Right ventricle myocardium superior (tissue), 1 donor: ENCODE measurements at regions of chr2 and their contacts with region 1.

Region 1: DNA sequence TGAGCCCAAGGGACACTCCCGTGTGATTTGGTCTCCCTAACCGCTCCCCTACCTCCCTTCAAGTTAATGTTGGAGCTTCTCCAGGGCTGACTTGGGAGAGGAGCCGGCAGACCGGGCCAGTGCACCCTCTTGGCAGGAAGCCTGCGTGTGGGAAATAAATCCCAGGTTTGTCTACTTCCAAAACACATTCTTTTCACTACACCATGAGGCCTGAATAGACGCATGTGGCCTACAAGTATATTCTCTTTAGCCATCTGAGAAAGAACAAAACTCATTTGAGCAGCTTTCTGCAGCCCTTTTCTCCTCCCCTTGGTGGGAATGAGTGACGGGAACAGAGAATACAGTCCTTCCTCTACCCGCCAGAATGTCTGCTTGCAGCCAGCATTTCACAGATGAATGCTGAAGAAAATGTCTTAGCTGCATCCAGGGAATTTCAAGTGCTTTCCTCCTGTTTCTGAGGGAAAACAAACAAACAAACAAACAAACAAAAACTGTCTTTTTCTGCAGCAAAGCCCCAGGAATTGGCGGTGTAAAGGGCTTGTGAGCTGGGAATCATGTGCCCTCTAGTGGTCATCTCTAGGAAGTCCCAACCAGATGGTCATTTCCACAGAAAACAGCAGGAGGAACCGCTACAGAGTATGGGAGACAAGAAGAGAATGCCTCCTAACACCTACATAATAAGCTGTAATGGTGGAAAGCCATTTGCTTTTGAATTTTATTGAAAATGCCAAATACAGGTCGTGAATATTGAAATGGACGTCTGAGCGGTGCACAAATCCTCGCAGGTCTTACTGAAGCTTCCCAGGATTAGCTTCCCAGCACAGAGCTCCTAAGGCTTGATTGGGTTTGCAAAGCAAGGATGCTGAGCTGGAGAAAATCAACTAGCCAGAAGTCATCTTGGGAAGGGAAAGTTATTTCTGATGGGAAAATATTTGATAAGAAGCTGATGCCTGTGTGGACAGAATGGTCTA is 41.2 kb upstream of the DAPL1 start:
- DNase-seq: no peak
- ATAC-seq: peak; percentile 93

Region 2: DNA sequence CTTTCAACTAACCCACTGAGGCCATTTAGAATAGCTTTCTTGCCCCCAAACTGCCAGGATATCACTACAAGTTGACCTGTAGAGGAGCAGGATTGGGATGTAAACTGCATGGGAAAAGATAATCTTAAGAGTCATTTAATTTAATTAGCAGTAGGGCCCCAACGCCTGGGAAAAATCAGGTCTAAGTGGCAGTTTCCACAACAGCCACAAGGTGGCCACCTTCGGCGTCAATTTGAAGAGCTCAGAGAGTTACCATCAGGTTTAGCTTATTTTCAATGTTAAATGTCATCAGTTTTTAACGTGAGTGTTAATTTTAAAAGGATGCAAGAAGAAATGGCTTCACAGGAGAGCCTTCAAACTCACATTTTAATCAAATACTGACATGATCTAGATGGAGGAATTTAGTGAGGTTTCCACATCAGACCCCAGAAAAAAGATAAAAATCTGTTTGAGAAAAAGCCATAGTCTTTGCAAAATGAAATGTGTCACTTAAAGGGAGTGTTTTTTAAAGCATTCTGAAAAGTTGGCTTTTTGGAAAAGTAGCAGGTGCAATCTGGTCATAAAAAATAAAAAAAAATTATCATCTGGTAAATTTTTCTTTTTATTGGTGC is 729.5 kb before region 1 on chr2:
- intact Hi-C with region 1: loop called (anchors 5 kb)
- DNase-seq: peak; percentile 62
- ATAC-seq: peak; percentile 56

Region 3: DNA sequence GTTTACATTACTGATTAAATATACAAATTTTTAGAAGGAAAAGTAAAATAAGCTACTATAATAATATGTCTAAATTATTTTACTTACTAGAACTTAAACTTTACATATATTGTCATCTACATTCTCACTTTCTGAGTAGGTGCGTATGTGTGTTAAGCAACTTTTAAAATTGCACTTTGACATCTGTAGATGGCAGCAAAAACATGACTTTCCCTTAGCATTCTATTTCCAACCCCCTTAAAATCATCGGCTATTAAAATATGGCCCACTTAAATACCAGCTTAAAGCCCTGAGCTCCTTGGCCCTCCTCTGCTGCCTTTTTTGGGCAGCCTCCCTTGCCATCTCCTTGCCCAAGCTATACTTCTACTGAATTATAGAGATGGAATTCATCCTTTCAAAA is 574.3 kb before region 1 on chr2:
- intact Hi-C with region 1: loop called (anchors 5 kb)
- DNase-seq: no peak
- ATAC-seq: peak; percentile 56

Region 4: DNA sequence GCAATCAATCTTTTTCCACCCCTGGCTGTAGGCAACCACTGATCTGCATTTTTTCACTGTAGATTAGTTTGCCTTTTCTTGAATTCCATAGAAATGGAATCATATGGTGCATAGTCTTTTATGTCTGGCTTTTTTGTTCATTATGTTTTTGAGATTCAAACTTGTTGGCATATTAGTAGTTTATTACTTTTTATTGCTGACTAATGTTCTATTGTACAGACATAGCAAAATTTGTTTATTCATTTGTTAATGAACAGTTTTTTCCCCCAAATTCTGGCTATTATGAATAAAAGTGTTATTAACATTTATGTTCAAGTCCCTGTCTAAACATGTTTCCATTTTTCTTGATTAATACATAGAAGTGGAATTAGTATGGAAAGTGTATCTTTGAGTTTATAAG is 554.0 kb after region 1 on chr2:
- intact Hi-C with region 1: no loop called
- DNase-seq: no peak
- ATAC-seq: no peak